Tibial artery (tissue), 4 donors: ENCODE measurements at regions of chr6 and their contacts with region 1.

Region 1: DNA sequence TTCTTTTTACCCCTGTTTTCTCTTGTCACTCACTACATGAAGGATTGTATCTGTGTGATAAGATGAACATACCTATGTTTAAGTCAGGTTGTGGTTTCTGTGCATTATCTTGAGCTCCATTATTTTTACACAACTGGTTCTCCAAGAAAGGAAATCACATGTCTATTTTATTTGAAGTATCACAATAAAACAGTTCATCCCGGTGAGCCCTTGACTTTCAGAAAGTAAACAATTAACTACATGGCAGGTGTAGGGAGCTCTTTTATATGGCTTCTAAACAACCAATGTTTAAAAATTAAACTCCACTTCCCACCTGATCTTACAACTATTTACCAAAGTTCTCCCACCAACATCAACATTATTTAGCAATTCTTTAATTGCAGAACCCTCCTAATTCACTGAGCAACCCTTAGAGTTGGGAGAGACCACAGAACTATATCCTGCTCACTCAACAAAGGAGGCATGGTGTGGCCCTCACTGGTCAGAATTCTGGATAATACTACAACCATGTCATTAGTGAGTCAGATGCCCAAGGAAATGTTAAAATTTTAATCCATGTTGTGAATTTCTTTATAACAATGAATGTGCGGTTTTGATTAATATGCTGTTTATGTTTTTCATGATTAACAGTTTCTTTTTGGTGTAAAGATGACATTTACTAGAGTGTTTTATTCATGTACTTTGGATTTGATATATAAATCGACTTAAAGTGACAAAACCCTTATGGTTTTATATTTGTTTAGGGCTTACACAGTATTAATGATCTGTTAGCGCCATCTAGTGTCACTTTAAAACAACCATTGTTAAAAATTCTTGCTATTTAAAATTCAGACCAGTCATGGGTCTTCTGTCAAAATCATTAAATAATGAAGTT is 50.0 kb upstream of the SCGN start:
- DNase-seq: no peak
- H3K4me3 ChIP-seq: no peak overlapping the region
- H3K27ac ChIP-seq: no peak overlapping the region
- H3K4me1 ChIP-seq: no peaks in the 10 kb centered on the region
- H3K27me3 ChIP-seq: no peaks in the 10 kb centered on the region
- CTCF ChIP-seq: peak; percentile 41 to 58

Region 2: GRCh38 chr6:25270559-25270958 is 331.5 kb before region 1 on chr6:
- intact Hi-C with region 1: loop called (anchors 5 kb)
- DNase-seq: no peak
- H3K4me3 ChIP-seq: no peak overlapping the region
- H3K27ac ChIP-seq: no peak overlapping the region
- H3K4me1 ChIP-seq: peaks cover 0 to 5% (median 0%) of the 10 kb centered on the region in 4 donors
- H3K27me3 ChIP-seq: no peaks in the 10 kb centered on the region
- CTCF ChIP-seq: no peak

Region 3: DNA sequence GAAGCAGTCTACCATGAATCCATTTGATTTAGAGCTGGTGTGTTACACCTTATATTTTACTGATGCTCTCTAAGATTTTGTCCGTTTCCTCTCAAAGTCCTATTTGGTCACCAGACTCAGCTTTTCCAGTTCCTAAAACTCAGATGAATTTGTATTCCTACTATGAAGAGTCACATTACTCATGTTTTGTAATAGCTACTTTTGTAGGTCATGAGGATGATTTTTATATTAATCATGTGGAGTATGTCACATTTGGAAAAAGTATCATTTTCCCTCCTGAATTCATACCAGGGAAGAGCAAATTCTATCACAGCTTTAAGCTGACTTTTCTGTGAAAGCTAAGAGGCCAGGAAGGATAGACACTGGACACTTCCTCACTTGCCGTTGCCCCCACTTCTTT is 90.7 kb before region 1 on chr6:
- intact Hi-C with region 1: loop called (anchors 10 kb)
- DNase-seq: no peak
- H3K4me3 ChIP-seq: no peak overlapping the region
- H3K27ac ChIP-seq: no peak overlapping the region
- H3K4me1 ChIP-seq: no peaks in the 10 kb centered on the region
- H3K27me3 ChIP-seq: no peaks in the 10 kb centered on the region
- CTCF ChIP-seq: no peak

Region 4: DNA sequence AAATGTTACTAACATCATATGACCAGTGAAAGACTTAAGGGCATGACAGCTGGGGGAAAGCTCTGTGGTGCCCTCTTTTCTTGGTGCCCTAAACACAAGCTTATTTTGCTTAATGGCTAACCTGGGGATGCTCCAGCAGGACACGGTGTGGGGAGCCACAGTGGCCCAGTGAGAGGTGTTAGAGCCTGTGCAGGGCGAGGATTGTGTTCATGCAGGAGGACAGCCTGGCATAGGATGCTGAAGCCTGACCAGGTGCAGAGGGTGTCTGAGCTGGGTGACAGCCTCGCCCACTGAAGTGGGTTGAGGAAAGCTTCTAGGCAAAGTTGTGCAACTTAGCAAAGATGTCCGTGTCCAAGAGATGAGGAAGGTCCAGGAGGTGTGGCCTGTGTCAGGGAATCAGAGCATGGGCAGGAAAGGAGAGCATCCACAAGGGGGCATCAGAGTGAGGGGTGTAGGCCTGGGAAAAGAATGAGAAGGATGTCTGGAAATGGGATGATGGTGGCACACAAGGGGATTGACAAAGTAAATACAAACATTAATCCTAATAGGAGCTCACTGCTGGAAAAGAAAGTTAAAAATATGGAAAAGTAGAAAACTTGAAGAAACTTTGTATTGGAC is 186.4 kb after region 1 on chr6:
- intact Hi-C with region 1: no loop called
- DNase-seq: peak; percentile 24 to 68
- H3K4me3 ChIP-seq: no peak overlapping the region
- H3K27ac ChIP-seq: no peak overlapping the region
- H3K4me1 ChIP-seq: no peaks in the 10 kb centered on the region
- H3K27me3 ChIP-seq: no peaks in the 10 kb centered on the region
- CTCF ChIP-seq: peak; percentile 34 to 35